Activated T-helper 1 cell treated with anti-CD3 and anti-CD28 coated beads, Interleukin-12 subunit alpha, Interleukin-12 subunit beta, Interleukin-2, Interleukin-4 antibody, amounts not matched to agents 30 ng/mL and 10 ng/mL and 1 ng/mL, durations not matched to agents 14 hours and 24 hours and 36 hours (primary cell): ENCODE measurements at regions of chr19 and their contacts with region 1.

Region 1: GRCh38 chr19:35648017-35648961 is at the start of gene COX6B1:
- DNase-seq: peak; percentile 93
- H3K4me3 Mint-ChIP-seq: peak within 1 kb of the TSS; percentile 95
- H3K27ac Mint-ChIP-seq: peak within 1 kb of the TSS; percentile 89
- H3K4me1 Mint-ChIP-seq: peaks cover 25% of the 10 kb centered on the region
- H3K27me3 Mint-ChIP-seq: no peaks in the 10 kb centered on the region
- total RNA-seq, gene COX6B1: 434 and 451 TPM in 2 replicates

Region 2: DNA sequence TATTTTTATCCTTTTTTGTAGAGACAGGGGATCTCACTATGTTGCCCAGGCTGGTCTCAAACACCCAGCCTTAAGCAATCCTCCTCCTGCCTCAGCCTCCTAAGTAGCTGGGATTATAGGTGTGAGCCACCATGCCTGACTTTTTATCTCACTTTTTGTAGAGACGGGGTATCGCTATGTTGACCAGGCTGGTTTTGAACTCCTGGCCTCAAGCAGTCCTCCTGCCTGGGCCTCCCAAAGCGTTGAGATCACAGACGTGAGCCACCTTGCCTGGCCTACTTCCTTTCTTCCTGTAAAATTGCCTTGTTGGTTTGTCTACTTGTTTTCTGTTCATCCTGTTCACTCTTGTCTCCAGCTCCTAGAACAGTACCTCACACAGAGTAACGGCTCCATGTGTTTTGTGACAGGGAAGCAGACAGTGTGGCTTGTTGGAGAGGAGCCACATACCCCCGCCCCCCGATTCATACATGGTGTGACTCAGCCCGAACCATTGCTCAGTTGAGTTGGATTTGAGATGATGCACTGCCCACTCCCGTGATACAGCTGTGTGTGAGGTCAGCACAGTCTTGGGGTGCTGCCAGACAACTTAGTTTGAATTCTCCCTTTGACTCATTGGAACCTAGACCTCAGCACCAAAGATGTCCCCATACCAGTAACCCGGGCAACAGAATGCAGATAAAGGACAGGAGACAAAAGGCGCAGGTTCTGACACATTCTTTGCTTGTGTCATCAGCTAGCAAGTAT is 243.2 kb before region 1 on chr19:
- intact Hi-C with region 1: no loop called
- DNase-seq: no peak
- H3K4me3 Mint-ChIP-seq: no peak overlapping the region
- H3K27ac Mint-ChIP-seq: peak overlapping the region; percentile 84
- H3K4me1 Mint-ChIP-seq: peaks cover 9% of the 10 kb centered on the region
- H3K27me3 Mint-ChIP-seq: peaks cover 10% of the 10 kb centered on the region

Region 3: DNA sequence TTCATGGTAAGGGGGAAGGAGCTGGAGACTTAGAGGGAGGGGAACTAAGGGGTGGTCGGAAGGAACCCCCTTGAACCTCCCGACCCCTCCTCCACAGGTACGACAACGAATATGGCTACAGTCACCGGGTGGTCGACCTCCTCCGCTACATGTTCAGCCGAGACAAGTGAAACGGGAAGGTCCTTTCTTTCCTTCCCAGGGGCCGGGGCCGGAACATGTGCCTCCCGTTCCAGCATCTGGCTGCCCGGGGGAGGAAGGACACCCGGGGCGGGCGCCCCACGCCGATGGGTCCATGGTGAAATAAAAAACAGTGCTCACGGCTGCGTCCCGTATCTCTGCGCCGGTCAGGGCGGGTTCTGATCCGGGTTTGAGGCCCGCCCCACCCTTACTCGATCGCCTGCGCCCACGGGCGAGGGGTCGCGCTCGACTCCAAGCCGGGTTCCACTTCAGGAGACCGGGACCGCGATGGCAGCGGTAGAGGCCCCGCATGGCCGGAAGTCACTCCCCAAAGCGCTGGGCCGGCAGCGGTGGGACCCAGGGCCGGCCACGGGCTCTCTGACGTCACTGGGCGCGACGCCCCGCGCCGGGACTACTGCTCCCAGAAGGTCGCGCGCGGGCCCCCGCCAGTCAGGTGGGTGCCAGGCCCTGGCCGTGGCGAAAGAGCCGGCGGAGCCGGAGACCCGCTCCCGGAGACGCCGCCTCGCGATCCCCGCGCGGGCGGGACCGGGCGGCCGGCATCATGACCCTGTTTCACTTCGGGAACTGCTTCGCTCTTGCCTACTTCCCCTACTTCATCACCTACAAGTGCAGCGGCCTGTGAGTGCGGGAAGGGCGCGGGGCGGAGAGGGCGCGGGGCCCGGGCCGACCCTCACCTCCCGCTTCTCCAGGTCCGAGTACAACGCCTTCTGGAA is 103.0 kb before region 1 on chr19 and contains the start of gene TMEM147:
- intact Hi-C with region 1: loop called (anchors 1 kb)
- DNase-seq: peak; percentile 82
- H3K4me3 Mint-ChIP-seq: peak within 1 kb of the TSS; percentile 97
- H3K27ac Mint-ChIP-seq: peak within 1 kb of the TSS; percentile 91
- H3K4me1 Mint-ChIP-seq: peaks cover 34% of the 10 kb centered on the region
- H3K27me3 Mint-ChIP-seq: no peaks in the 10 kb centered on the region
- total RNA-seq, gene TMEM147: 122 and 123 TPM in 2 replicates

Region 4: DNA sequence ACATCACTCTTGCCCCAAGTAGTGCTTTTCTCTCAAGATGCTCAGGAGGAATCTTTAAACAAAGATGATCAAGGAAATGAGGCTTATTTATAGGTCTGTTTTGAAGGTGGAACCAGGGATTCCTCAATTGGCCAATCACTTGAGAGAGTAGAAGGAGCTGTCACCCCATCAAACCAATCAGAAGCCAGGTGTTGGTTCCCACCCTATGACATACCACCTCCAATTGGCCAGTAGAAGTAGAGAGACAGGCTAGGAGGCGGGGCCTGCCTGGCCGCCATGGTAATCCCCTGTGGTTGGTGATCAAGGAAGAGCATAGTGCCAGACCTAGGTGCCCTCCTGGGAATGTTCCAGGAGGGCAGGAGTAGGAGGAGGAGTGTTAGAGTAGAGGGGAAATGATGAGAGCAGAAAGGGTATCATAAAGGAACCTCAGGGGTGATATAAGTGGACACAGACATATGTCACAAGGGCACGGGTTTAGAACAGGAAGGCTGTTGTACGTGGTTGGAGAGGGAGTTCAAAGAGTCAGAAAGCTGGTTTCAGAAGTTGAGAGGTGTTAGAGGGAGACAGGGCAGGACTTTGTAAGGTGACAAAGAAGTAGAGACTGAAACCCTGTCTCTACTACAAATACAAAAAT is 51.8 kb before region 1 on chr19:
- intact Hi-C with region 1: no loop called
- DNase-seq: no peak
- H3K4me3 Mint-ChIP-seq: no peak overlapping the region
- H3K27ac Mint-ChIP-seq: peak overlapping the region; percentile 3
- H3K4me1 Mint-ChIP-seq: peaks cover 10% of the 10 kb centered on the region
- H3K27me3 Mint-ChIP-seq: peaks cover 6% of the 10 kb centered on the region

Region 5: GRCh38 chr19:35673121-35673804 is 25.0 kb after region 1 on chr19:
- intact Hi-C with region 1: loop called (anchors 1 kb)
- DNase-seq: peak; percentile 58
- H3K4me3 Mint-ChIP-seq: peak overlapping the region; percentile 81
- H3K27ac Mint-ChIP-seq: peak overlapping the region; percentile 29
- H3K4me1 Mint-ChIP-seq: peaks cover 15% of the 10 kb centered on the region
- H3K27me3 Mint-ChIP-seq: peaks cover 37% of the 10 kb centered on the region

Region 6: DNA sequence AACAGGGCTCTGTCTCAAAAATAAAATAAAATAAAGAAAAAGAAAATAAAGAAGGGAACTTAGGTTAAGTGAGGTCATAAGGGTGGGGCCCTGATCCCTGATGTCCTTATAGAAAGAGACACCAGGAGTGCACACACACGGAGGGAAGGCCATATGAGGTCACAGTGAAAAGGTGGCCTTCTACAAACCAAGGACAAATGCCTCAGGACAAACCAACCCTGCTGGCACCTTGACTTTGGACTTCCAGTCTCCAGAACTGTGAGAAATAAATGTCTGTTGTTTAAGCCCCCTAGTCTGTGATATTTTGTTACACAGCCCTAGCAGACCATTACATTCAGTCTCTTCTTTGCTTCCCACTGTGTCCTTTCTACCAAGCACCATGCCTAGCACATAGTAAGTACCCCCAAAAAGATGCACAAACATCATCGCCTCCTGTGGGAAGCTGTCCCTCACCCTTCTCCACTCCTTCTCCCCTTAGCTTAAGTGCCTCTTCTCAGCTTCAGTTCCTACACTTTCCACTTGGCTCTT is 47.7 kb after region 1 on chr19:
- intact Hi-C with region 1: no loop called
- DNase-seq: no peak
- H3K4me3 Mint-ChIP-seq: no peak overlapping the region
- H3K27ac Mint-ChIP-seq: no peak overlapping the region
- H3K4me1 Mint-ChIP-seq: peaks cover 32% of the 10 kb centered on the region
- H3K27me3 Mint-ChIP-seq: no peaks in the 10 kb centered on the region

Region 7: DNA sequence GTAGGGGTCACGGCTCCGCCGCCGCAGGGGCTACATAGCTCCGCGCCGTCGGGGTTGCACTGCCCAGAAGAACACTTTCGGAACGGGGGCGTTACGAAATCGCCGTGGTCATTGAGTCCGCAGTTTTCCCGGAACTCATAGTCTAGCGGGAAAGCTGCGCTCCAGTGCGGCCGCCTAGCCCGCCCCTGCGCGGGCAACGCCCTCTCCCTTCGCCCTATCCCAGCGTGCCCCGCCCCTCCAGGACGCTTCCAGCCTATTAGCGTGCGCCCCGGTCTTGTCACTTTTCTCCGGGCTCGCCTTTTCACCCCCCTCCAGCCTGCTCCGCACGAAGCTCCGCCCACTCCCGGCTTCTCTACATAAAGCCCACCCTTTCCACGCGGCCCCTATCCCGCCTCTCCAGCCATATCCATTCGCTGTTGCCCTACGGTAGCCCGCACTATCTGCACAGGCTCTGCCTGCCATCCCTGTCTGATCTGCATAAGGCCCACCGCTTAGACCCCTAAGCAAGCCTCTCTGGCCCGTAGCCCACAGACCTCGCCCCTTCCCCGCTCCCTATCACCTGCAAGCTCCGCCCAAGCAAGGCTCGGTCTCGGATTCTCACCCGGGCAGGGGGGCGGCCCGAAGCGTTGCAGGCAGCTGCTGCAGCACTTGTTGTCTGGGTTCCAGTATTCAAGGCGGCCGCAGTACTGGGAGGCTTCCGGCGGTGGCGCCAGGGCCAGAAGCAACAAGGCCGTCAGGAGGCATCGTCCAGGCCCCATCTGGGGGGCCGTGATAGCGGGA is 92.3 kb after region 1 on chr19:
- intact Hi-C with region 1: loop called (anchors 1 kb)
- DNase-seq: peak; percentile 95
- H3K4me3 Mint-ChIP-seq: peak overlapping the region; percentile 93
- H3K27ac Mint-ChIP-seq: peak overlapping the region; percentile 93
- H3K4me1 Mint-ChIP-seq: peaks cover 23% of the 10 kb centered on the region
- H3K27me3 Mint-ChIP-seq: peaks cover 2% of the 10 kb centered on the region

Region 8: DNA sequence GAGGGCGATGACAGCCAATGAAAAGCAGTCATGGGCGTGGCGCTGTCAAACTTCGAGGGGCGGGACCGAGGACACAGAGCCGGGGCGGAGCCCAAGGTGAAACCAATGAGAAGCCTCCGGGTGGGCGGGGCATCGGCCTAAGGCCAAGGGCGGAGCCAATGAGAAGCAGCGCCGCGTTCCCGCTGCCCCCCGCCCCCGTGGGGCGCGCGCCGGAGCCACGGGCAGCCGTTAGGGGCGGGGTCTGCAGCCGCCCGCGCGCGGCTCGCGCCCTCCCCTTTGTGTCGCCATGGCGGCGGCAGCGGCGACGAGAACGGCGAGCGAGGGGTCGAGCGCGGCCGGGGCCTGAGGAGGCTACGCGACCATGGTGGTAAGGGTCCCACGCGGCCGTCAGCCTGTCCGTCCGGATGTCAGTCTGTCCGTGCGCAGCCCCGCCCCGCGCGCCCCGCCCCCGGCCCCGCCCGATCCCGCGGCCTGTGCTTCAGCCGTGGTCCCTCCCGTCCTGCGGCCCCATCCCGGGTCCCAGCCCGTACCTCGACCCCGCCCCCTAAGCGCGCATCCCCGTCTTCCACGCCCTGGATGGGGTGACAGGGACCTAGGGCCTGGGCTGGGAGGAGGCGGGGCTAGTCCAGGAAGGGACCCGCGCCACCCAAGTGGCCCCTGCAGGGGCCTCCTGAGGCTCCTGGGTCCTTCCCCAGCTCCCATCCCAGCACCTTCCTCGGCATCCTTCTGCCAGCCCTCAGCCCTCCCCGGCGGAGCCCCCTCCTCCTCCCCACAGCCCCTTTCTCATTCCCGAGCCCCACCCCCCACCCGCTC is 127.2 kb after region 1 on chr19 and contains the start of gene ARHGAP33:
- intact Hi-C with region 1: loop called (anchors 1 kb)
- DNase-seq: peak; percentile 99
- H3K4me3 Mint-ChIP-seq: peak within 1 kb of the TSS; percentile 85
- H3K27ac Mint-ChIP-seq: peak within 1 kb of the TSS; percentile 61
- H3K4me1 Mint-ChIP-seq: peaks cover 29% of the 10 kb centered on the region
- H3K27me3 Mint-ChIP-seq: no peaks in the 10 kb centered on the region
- total RNA-seq, gene ARHGAP33: 24.5 and 25.8 TPM in 2 replicates

Region 9: GRCh38 chr19:36054119-36054732 is 405.9 kb after region 1 on chr19 and contains the start of gene THAP8:
- intact Hi-C with region 1: loop called (anchors 1 kb)
- DNase-seq: peak; percentile 100
- H3K4me3 Mint-ChIP-seq: peak within 1 kb of the TSS; percentile 99
- H3K27ac Mint-ChIP-seq: peak within 1 kb of the TSS; percentile 96
- H3K4me1 Mint-ChIP-seq: peaks cover 45% of the 10 kb centered on the region
- H3K27me3 Mint-ChIP-seq: no peaks in the 10 kb centered on the region
- total RNA-seq, gene THAP8: 1.6 TPM in 2 replicates